ENCODE measurements at regions of chr11 and their contacts with region 1.

Region 1: DNA sequence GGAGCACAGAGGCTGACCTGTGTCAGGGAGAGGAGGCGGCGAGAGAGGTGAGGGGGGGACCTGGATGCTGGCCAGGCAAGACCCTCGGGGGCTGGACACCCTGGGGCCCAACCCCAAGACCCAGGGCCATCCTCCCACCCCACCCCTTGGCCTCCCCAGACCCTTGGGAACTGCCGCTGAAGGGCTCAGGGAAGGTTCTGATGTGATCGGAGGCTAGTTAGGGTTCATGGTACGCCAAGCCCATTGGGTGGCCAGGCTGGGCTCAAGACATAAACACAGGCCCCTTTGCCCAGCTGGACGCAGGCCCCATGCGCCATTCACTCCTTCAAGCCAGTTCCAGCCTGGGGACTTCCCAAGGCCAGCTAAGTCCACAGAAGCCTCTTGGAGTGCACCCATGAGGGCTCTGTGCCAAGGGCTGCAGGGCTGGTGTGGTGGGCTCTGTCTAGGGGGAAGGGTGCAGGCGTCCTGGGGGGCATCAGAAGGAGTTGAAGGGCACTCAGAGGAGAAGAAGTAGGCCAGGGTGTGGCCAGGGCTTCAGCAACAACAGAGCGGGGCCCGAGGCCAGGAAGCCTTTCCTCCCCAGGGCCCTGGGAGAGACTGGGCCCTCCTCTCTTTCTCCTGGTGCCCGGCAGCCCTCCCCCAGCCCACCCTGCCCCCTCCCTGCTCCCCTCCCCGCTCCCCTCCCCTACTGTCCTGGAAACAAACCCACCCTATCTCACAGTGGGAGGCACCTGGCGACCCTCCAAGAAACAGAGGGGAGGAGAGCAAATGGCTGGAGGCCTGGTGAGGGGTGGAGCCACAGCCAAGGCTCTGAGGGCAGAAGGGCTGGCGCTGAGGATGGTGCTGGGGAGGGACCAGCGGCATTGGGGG is 12.9 kb downstream of the TSPAN32 start:
- DNase-seq: peak; percentile 96 to 98 (median 97)
- ATAC-seq: peak; percentile 90 to 91
- H3K4me3 ChIP-seq: no peak overlapping the region
- H3K27ac ChIP-seq: peak overlapping the region; percentile 82
- H3K4me1 ChIP-seq: peaks cover 6% of the 10 kb centered on the region
- H3K27me3 ChIP-seq: no peaks in the 10 kb centered on the region

Region 2: DNA sequence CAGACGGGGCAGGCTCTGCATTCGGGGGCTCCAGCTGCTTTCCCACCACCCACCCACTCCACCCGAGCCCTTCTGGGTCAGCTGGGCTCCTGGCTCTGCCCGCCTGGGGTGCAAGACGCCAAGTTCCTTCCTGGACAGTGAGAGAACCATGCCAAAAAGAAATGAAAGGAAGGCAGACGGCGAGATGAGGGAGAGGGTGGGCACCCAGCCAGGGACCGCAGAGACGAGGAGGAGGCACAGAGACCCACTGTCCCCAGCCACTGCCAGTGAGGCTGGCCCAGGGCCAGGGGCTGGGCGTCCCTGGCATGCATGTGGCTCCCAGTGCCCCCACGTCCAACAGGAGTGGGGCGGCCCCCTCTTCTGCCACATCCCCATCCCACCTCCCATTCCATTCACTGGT is 51.5 kb after region 1 on chr11:
- intact Hi-C with region 1: loop called in 3 of 4 experiments (anchors 5 to 10 kb)
- DNase-seq: peak; percentile 52 to 84 (median 83)
- ATAC-seq: peak in 1 of 2 donors; percentile 24
- H3K4me3 ChIP-seq: no peak overlapping the region
- H3K27ac ChIP-seq: no peak overlapping the region
- H3K4me1 ChIP-seq: peaks cover 9% of the 10 kb centered on the region
- H3K27me3 ChIP-seq: no peaks in the 10 kb centered on the region

Region 3: DNA sequence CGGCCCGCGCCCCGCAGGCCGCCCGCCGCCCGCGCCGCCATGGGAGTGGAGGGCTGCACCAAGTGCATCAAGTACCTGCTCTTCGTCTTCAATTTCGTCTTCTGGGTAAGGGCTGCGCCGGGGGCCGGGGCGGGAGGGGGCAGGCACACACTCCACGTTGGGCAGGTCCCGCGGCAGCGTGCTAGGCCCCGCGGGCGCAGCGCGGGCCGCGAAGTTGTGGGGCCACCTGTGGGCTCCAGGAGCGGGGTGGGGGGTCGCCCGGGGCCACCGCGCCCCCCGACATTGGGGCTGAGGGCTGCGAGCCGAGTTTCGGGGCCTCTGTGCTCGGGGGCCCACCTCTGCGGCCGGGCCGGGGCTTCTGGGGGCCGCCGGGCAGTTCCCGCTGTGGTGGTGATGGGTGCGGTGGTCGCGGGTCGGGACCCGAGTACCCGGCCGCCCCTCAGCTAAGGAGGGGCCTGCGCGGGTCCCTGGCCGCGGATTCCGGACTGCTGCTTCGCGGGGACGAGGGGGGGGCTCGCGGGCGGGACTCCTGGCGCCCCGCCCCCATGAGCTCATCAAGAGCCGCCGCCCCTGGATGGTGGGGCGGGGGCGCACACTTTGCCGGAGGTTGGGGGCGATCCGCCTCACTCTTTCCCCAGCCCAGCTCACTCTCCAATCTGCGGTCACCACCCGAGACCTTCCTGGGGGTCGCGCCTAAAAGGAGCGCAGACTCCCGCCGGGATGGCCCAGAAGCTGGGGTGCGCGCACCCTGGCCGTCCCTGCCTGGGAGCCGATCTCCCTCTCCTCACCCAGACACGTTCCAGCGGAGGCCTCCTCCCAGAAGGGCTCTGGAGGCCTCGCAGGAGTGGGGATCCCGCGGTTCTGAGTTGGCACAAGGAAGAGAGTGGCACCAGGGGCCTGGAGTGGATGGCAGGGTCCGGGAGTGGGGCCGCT is 63.0 kb after region 1 on chr11:
- intact Hi-C with region 1: loop called in 2 of 4 experiments (anchors 5 to 10 kb)
- DNase-seq: peak; percentile 77 to 93 (median 91)
- ATAC-seq: peak; percentile 25 to 51
- H3K4me3 ChIP-seq: peak overlapping the region; percentile 97
- H3K27ac ChIP-seq: peak overlapping the region; percentile 96
- H3K4me1 ChIP-seq: peaks cover 20% of the 10 kb centered on the region
- H3K27me3 ChIP-seq: no peaks in the 10 kb centered on the region

Region 4: DNA sequence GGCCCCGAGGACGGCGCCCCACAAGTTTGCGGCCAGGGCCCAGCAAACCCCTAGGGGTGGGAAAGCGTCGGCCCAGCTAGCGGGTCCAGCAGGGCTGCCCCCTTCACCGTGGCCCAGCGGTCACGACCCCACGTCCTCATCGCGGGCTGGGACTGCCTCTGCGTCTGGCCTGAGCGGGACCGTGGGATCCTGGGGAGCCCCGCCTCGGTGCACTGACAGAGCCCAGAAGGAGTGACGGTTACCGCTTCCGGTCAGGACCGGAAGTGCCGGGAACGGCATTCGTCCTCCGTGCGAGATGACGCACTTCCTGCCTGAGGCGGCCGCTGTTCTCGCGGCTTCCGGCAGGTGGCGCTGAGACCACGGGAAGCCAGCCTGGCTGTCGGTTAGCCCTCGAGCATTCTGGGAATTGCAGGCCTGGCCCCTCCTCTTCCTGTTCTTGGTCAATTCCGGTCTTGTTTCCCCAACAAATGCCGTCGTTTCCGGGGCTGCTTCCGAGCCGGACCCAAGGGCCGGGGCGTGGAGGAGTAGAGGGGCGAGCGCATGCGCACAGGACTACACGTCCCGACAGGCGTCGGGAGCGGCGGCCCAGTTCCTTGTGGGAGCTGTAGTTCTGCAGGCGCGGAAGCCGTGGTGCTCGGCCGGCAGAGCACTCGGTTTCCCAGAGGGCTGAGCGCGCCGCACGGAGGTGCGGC is 85.5 kb after region 1 on chr11 and contains the start of gene TSSC4:
- intact Hi-C with region 1: loop called in 1 of 4 experiments (anchors 5 kb)
- DNase-seq: peak; percentile 100
- ATAC-seq: peak; percentile 92 to 94
- H3K4me3 ChIP-seq: peak within 1 kb of the TSS; percentile 68
- H3K27ac ChIP-seq: peak within 1 kb of the TSS; percentile 94
- H3K4me1 ChIP-seq: peaks cover 13% of the 10 kb centered on the region
- H3K27me3 ChIP-seq: no peaks in the 10 kb centered on the region
- total RNA-seq, gene TSSC4: 30.5 to 50.4 (median 37.1) TPM